ENCODE measurements at regions of chr16 and their contacts with region 1.

Region 1: GRCh38 chr16:24729362-24729984 is at the start of gene TNRC6A:
- DNase-seq: peak; percentile 90 to 93
- ATAC-seq: peak; percentile 93 to 98 (median 96)
- H3K4me3 ChIP-seq: peak within 1 kb of the TSS; percentile 57 to 90 (median 83)
- H3K27ac ChIP-seq: peak within 1 kb of the TSS; percentile 77 to 98 (median 96)
- H3K4me1 ChIP-seq: peaks cover 5 to 44% (median 38%) of the 10 kb centered on the region in 9 donors
- H3K27me3 ChIP-seq: no peaks in the 10 kb centered on the region
- CTCF ChIP-seq: no peak
- total RNA-seq, gene TNRC6A: 31.6 to 51.4 (median 37.3) TPM

Region 2: DNA sequence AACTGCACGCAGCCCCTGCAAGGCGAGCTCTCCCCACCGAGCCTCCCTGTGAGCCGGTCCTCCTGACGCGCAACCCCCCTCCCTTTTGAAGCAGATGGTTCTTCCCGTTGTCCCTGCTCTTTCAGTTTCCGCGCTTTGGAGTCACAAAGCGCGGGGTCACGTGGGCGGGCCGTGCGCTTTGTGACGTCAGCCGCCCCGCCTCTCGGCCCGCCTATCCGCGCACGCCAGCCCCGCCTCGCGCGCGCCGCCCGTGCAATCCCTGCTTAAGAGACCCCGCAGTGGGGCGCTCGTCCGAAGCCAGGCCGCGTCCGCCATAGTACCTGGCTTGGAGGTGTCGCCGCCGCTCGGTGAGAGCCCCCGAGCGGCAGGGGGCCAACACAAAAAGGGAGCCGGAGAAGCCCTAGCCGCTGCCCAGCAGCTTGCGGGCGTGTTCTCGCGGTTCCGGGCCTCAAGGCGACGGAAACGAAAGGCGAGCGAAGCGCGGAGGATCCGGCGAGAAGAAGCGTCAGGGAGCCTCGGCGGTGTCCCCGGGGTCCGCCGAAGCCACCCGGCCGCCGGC is 190.1 kb before region 1 on chr16 and contains the start of gene RBBP6:
- intact Hi-C with region 1: loop called in 1 of 10 experiments (anchors 5 kb)
- DNase-seq: peak; percentile 93 to 95
- ATAC-seq: peak; percentile 95 to 98 (median 97)
- H3K4me3 ChIP-seq: peak within 1 kb of the TSS; percentile 61 to 97 (median 82)
- H3K27ac ChIP-seq: peak within 1 kb of the TSS; percentile 95 to 100 (median 100)
- H3K4me1 ChIP-seq: peaks cover 3 to 35% (median 29%) of the 10 kb centered on the region in 9 donors
- H3K27me3 ChIP-seq: no peaks in the 10 kb centered on the region
- CTCF ChIP-seq: peak; percentile 7 to 57 (median 39)
- total RNA-seq, gene RBBP6: 26.8 to 50.3 (median 33.1) TPM

Region 3: GRCh38 chr16:24700549-24701392 is 28.7 kb before region 1 on chr16:
- intact Hi-C with region 1: loop called in 1 of 10 experiments (anchors 2 kb)
- DNase-seq: peak; percentile 48 to 87
- ATAC-seq: peak; percentile 92 to 98 (median 97)
- H3K4me3 ChIP-seq: no peak overlapping the region
- H3K27ac ChIP-seq: peak overlapping the region in 9 of 10 donors; percentile 45 to 79 (median 69)
- H3K4me1 ChIP-seq: peaks cover 0 to 21% (median 18%) of the 10 kb centered on the region in 9 donors
- H3K27me3 ChIP-seq: no peaks in the 10 kb centered on the region
- CTCF ChIP-seq: peak in 7 of 9 donors; percentile 26 to 58 (median 32)

Region 4: DNA sequence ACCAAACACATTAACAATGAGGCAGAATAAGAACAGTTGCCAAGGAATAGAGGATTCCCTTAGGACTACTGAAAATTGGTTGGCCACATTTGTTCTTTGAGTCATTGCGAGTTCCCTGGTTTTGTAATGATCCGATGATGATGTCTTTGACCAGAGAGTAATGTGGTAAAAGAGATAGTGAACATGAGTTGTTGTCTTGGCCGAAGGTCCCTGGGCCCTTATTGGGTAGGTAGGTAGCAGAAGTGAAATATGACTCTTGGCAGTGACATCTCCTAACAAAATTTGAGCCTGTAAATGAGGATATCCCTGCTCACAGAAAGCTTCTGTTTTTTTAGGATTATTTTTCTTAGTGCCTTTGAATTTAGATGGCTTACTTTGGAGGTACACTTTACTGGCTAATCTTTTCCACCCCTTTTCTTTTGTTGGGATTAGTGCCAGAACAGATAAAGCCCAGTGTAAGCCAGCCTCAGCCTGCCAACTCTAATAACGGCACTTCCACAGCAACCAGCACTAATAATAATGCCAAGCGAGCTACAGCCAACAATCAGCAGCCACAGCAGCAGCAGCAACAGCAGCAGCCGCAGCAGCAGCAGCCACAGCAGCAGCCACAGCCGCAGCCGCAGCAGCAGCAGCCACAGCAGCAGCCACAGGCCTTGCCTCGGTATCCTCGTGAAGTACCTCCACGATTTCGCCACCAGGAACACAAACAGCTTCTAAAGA is 47.2 kb after region 1 on chr16:
- intact Hi-C with region 1: loop called in 4 of 10 experiments (anchors 2 to 10 kb)
- DNase-seq: peak; percentile 27 to 41
- ATAC-seq: peak; percentile 70 to 89 (median 87)
- H3K4me3 ChIP-seq: no peak overlapping the region
- H3K27ac ChIP-seq: peak overlapping the region in 9 of 10 donors; percentile 16 to 68 (median 53)
- H3K4me1 ChIP-seq: peaks cover 7 to 62% (median 45%) of the 10 kb centered on the region in 9 donors
- H3K27me3 ChIP-seq: no peaks in the 10 kb centered on the region
- CTCF ChIP-seq: no peak

Region 5: GRCh38 chr16:24789881-24790280 is 60.4 kb after region 1 on chr16:
- intact Hi-C with region 1: loop called in 1 of 10 experiments (anchors 10 kb)
- DNase-seq: no peak
- ATAC-seq: no peak
- H3K4me3 ChIP-seq: no peak overlapping the region
- H3K27ac ChIP-seq: no peak overlapping the region
- H3K4me1 ChIP-seq: peaks cover 0 to 16% (median 4%) of the 10 kb centered on the region in 9 donors
- H3K27me3 ChIP-seq: no peaks in the 10 kb centered on the region
- CTCF ChIP-seq: no peak